ENCODE measurements at regions of chr5 and their contacts with region 1.

Region 1: DNA sequence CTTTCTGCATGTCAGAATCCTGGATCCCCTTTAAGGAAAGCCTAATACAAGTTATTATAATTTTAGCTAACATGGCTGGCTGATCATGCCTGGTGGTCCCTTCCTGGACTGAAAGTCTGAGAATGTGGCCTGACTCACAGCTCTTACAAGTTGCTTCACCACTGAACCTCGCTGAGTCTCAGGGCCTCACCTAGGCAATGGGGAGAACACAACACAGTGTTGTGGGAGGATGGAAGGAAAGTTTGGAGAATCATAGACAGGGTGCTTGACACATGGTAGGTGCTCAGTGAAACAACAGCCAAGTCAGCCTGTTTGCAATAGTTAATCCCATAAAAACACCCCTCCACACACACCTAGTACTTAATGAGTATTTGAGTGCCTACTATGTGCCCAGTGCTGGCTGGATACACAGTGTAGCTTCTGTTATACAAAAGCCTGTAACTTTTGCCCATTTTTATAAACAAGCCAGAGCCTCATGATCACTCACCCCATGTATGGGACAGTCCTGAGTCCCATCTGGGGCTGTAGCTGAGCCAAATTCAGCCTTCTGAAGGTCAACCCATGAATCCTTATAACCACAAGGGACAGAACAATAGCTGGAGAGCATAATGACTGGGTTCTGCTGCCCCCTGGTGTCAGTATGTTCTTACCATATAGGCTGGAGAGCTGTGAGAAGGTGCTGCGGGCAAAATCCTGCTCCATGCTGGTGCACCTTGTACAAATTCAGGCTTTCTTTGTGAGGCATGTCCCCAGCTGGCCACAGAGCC is 3.9 kb downstream of the ACSL6 start:
- DNase-seq: peak; percentile 84 to 90 (median 85)
- H3K4me3 ChIP-seq: no peak overlapping the region
- H3K27ac ChIP-seq: no peak overlapping the region
- H3K4me1 ChIP-seq: peaks cover 0 to 24% (median 20%) of the 10 kb centered on the region in 4 experiments
- H3K27me3 ChIP-seq: peaks cover 0 to 37% (median 18%) of the 10 kb centered on the region in 5 experiments

Region 2: GRCh38 chr5:131423056-131423455 is 584.5 kb before region 1 on chr5:
- CTCF ChIA-PET with region 1: interaction called, 17 read pairs
- POLR2A ChIA-PET with region 1: no interaction called
- DNase-seq: peak; percentile 24 to 43 (median 26)
- H3K4me3 ChIP-seq: no peak overlapping the region
- H3K27ac ChIP-seq: no peak overlapping the region
- H3K4me1 ChIP-seq: peaks cover 0 to 2% (median 0%) of the 10 kb centered on the region in 4 experiments
- H3K27me3 ChIP-seq: no peaks in the 10 kb centered on the region

Region 3: DNA sequence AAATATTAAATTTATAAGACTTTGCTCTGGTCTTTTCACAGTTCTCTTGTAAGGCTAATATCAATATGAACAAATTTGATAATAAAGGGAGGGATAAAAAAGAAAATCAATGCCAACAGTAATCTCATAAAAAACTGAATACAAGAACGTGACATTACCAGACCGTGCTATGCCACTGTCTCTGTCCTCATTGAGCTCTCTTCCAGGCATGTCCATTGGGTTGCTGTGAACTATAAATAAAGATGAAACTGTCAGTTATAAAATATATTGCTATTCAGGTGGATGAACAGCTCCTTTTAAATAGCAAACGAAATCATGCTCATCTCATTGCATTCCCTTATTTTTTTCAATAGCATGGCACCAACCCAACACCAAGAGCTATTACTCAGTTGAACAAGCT is 298.5 kb before region 1 on chr5:
- CTCF ChIA-PET with region 1: interaction called, 17 read pairs
- POLR2A ChIA-PET with region 1: no interaction called
- DNase-seq: no peak
- H3K4me3 ChIP-seq: no peak overlapping the region
- H3K27ac ChIP-seq: no peak overlapping the region
- H3K4me1 ChIP-seq: peaks cover 8 to 30% (median 12%) of the 10 kb centered on the region in 4 experiments
- H3K27me3 ChIP-seq: no peaks in the 10 kb centered on the region

Region 4: DNA sequence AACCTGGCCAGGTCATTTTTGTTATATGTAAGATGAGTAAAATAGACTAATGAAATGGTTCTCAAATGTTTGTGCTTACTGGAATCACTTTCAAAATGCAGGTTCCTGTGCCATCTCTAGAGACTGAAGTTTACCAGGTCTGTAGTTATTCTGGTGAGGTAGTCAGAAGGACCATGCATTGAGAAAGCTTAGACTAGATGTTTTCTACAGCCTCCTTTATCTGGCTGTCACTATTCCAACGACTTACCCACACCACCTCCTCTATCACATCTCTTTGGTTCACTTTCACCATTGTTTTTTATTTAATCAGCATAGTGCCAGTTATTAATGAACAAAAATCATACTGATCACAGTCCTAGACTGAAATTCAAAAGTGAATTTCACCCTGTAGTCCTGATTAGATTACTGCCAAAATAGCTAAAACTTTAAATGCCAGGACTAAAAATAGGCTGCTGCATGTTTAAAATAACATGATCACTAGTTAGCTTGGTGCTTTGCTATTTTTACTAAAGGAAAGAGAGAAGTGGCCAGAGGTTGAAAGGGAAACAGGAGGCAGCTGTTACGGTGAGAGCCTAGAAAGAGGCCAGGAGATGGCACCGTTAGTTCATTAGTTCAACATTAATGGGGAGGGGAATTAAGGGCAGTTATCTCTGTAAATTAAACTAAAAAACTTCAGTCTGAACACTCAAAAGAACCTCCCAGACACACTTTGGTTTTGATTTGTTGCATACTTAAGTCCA is 196.9 kb before region 1 on chr5:
- CTCF ChIA-PET with region 1: interaction called, 85 read pairs
- POLR2A ChIA-PET with region 1: no interaction called
- DNase-seq: peak; percentile 53 to 79 (median 76)
- H3K4me3 ChIP-seq: no peak overlapping the region
- H3K27ac ChIP-seq: no peak overlapping the region
- H3K4me1 ChIP-seq: peaks cover 0 to 5% (median 2%) of the 10 kb centered on the region in 4 experiments
- H3K27me3 ChIP-seq: no peaks in the 10 kb centered on the region

Region 5: DNA sequence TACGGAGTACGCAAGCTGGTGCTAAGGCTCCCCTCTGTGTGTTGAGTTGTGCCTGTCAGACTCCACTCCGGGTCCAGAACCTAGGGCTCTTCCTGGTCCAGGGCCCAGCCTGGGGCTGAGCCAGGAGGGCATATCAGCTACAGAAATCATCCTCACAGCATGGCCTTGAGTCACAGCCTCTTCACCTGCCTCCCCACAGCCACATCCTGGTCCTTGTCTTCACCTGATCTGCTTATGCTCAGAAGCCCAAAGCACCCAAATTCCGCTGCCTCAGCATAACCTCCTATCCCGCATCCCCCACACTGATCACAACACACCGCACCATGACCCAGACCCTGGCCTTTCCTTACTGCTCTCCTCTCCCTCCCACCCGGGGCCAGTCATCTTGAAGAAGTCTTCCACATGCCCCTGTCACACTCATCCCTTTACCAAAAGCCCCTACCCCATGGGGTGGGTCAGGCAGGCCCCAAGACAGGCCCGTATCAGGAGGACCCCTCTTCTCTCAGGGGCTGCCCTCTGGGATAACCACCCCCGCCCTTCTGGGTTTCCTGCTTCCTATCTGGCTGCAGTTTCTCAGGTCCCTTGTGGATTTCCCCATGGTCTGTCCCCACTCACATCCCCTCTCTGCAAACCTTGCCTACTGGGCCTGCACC is 51.6 kb after region 1 on chr5:
- CTCF ChIA-PET with region 1: interaction called, 11 read pairs
- POLR2A ChIA-PET with region 1: no interaction called
- DNase-seq: no peak
- H3K4me3 ChIP-seq: no peak overlapping the region
- H3K27ac ChIP-seq: no peak overlapping the region
- H3K4me1 ChIP-seq: peaks cover 0 to 25% (median 16%) of the 10 kb centered on the region in 4 experiments
- H3K27me3 ChIP-seq: no peaks in the 10 kb centered on the region

Measured in common myeloid progenitor, CD34-positive (primary cell).